Prostate gland (tissue), 2 donors: ENCODE measurements at regions of chr2 and their contacts with region 1.

Region 1: GRCh38 chr2:70301344-70302194 is at the start of gene FAM136A:
- DNase-seq: peak; percentile 78
- H3K4me3 ChIP-seq: peak within 1 kb of the TSS; percentile 76 to 81
- H3K27ac ChIP-seq: peak within 1 kb of the TSS; percentile 85 to 89
- H3K4me1 ChIP-seq: peaks cover 3% of the 10 kb centered on the region
- H3K27me3 ChIP-seq: no peaks in the 10 kb centered on the region
- CTCF ChIP-seq: peak; percentile 93 to 98 (median 96)
- POLR2A ChIP-seq: peak; percentile 42
- total RNA-seq, gene FAM136A: 26.2 to 31.1 TPM

Region 2: DNA sequence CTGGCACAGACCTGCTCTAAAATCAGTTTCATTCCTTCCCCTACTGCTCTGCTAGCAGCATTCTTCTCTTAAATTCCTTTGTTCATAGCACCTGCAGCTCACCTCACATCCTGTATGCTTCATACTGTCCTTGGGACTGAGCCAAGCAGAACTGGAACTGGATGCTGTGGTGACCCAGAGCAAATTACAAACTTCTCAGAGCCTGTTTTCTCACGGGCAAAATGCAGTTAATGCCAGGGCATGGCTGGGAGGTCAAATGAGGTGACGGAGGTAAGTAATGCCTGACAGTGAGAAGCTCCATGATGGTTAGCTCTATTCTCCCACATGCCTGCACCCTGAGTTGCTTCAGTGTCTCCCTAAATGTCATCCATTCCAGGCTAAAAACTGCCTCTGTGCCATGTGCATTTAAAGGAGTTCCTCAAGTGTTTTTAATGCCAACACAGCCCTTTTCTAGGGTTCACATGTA is 140.5 kb before region 1 on chr2:
- intact Hi-C with region 1: no loop called
- DNase-seq: no peak
- H3K4me3 ChIP-seq: no peak overlapping the region
- H3K27ac ChIP-seq: no peak overlapping the region
- H3K4me1 ChIP-seq: no peaks in the 10 kb centered on the region
- H3K27me3 ChIP-seq: no peaks in the 10 kb centered on the region
- CTCF ChIP-seq: no peak
- POLR2A ChIP-seq: no peak

Region 3: GRCh38 chr2:70190418-70191243 is 110.9 kb before region 1 on chr2 and contains the start of gene C2orf42:
- intact Hi-C with region 1: loop called (anchors 10 kb)
- DNase-seq: peak; percentile 96
- H3K4me3 ChIP-seq: peak within 1 kb of the TSS; percentile 62 to 77
- H3K27ac ChIP-seq: peak within 1 kb of the TSS; percentile 97 to 98
- H3K4me1 ChIP-seq: no peaks in the 10 kb centered on the region
- H3K27me3 ChIP-seq: no peaks in the 10 kb centered on the region
- CTCF ChIP-seq: peak in 1 of 4 experiments; percentile 8
- POLR2A ChIP-seq: peak; percentile 79
- total RNA-seq, gene C2orf42: 23.6 to 27.9 TPM

Region 4: GRCh38 chr2:70261501-70261900 is 40.1 kb before region 1 on chr2:
- intact Hi-C with region 1: loop called (anchors 5 kb)
- DNase-seq: no peak
- H3K4me3 ChIP-seq: no peak overlapping the region
- H3K27ac ChIP-seq: no peak overlapping the region
- H3K4me1 ChIP-seq: peaks cover 18% of the 10 kb centered on the region
- H3K27me3 ChIP-seq: no peaks in the 10 kb centered on the region
- CTCF ChIP-seq: no peak
- POLR2A ChIP-seq: no peak

Region 5: GRCh38 chr2:70616168-70616694 is 314.7 kb after region 1 on chr2:
- intact Hi-C with region 1: loop called (anchors 2 kb)
- DNase-seq: no peak
- H3K4me3 ChIP-seq: no peak overlapping the region
- H3K27ac ChIP-seq: no peak overlapping the region
- H3K4me1 ChIP-seq: no peaks in the 10 kb centered on the region
- H3K27me3 ChIP-seq: no peaks in the 10 kb centered on the region
- CTCF ChIP-seq: no peak
- POLR2A ChIP-seq: no peak